Activated CD4-positive, alpha-beta memory T cell treated with anti-CD3 and anti-CD28 coated beads for 36 hours (primary cell): ENCODE measurements at regions of chr10 and their contacts with region 1.

Region 1: GRCh38 chr10:24209946-24210491 is 1.1 kb downstream of the KIAA1217 start:
- DNase-seq: peak; percentile 79
- H3K4me3 Mint-ChIP-seq: peak overlapping the region; percentile 42
- H3K27ac Mint-ChIP-seq: no peak overlapping the region
- H3K4me1 Mint-ChIP-seq: peaks cover 28% of the 10 kb centered on the region
- H3K27me3 Mint-ChIP-seq: peaks cover 44% of the 10 kb centered on the region

Region 2: DNA sequence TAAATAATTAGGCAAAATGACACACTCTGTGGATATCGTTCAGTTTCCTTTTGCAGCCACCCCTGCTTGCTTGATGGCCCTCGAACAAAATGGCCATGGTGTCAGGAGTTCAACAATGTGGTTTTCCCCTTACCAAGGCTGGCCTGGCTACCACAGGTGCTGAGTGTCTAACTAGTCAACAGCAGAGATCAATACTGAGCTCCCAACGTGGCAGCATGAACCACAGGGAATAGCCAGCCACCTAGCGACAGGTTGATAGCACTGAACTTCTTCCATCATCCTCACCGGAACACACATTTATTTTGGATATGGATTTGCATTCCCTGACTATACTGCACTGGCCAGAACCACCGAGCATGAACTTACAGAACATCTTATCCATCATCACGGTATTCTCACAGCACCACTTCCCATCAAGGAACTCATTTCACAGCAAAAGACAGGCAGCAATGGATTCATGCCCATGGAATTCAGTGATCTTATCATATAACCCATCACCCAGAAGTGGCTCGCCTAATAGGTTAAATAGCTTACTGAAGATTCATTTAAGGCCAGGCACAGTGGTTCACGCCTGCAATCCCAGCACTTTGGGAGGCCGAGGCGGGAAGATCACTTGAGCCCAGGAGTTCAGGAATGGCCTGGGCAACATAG is 871.7 kb before region 1 on chr10:
- CTCF ChIA-PET with region 1: no interaction called
- POLR2A ChIA-PET with region 1: no interaction called
- intact Hi-C with region 1: loop called (anchors 1 kb)
- DNase-seq: no peak
- H3K4me3 Mint-ChIP-seq: no peak overlapping the region
- H3K27ac Mint-ChIP-seq: no peak overlapping the region
- H3K4me1 Mint-ChIP-seq: peaks cover 73% of the 10 kb centered on the region
- H3K27me3 Mint-ChIP-seq: no peaks in the 10 kb centered on the region

Region 3: DNA sequence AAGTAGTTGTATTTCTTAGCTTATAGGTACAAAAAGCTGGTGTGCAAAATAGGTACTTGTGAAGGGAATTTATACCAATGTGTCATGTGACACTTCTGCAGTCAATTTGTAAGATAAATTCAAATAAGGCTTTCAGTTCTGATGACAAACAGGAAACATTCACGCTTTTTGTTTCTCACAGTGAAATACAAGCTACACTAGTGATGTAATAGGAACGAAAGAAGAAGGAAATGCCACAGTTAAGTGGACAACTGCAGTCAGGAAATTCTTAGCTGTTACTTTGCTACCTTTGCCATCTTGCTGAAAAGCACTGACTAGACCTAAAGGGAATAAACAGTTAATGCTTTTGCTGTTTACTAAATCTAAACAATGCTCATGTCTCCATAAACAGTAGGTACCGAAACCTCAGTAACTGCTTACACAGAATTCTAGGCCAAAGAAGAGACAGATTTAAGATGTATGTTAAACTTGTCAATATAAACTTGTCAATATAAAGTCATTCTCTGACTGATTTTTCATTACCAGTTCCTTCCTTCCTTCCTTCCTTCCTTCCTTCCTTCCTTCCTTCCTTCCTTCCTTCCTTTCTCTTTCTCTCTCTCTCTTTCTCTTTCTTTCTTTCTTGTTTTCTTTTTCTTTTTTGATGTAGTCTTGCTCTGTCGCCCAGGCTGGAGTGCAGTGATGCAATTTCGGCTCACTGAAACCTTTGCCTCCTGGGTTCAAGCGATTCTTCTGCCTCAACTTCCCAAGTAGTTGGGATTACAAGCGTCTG is 761.0 kb before region 1 on chr10:
- CTCF ChIA-PET with region 1: no interaction called
- POLR2A ChIA-PET with region 1: no interaction called
- intact Hi-C with region 1: loop called (anchors 1 kb)
- DNase-seq: no peak
- H3K4me3 Mint-ChIP-seq: no peak overlapping the region
- H3K27ac Mint-ChIP-seq: peak overlapping the region; percentile 82
- H3K4me1 Mint-ChIP-seq: peaks cover 34% of the 10 kb centered on the region
- H3K27me3 Mint-ChIP-seq: no peaks in the 10 kb centered on the region

Region 4: DNA sequence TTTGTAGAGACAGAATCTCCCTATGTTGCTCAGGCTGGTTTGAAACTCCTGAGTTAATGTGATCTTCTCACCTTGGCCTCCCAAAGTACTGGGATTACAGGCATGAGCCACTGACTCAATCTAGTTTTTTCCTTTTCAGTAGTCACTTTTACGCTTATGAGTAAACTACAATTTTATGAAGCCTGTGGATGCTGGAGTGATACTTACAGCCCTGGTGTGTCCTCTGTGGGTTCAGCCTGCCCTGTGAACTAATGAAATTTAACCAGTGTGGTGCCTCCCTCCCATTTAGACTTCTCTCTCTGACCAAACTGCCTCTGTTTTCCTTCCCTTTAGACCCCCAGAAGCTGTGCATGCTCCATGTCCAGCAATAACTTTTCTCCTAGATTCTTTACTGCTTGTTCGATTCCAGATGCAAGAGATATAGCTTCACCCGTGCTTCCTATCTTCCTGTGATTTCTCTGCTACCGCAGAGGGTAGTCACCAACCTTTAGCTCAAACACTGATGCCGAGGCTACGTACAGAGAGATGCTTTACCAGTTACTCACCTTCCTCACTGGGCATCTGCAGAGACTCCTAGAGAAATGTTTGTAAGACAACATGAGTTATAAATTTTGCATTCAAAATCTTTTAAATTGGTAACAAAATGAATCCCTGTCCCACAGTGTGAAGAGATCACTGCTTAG is 89.7 kb after region 1 on chr10:
- CTCF ChIA-PET with region 1: no interaction called
- POLR2A ChIA-PET with region 1: no interaction called
- intact Hi-C with region 1: loop called (anchors 1 kb)
- DNase-seq: peak; percentile 9
- H3K4me3 Mint-ChIP-seq: no peak overlapping the region
- H3K27ac Mint-ChIP-seq: no peak overlapping the region
- H3K4me1 Mint-ChIP-seq: peaks cover 5% of the 10 kb centered on the region
- H3K27me3 Mint-ChIP-seq: peaks cover 5% of the 10 kb centered on the region

Region 5: GRCh38 chr10:24383681-24384106 is 173.7 kb after region 1 on chr10:
- CTCF ChIA-PET with region 1: no interaction called
- POLR2A ChIA-PET with region 1: no interaction called
- intact Hi-C with region 1: loop called (anchors 1 kb)
- DNase-seq: peak; percentile 78
- H3K4me3 Mint-ChIP-seq: peak overlapping the region; percentile 12
- H3K27ac Mint-ChIP-seq: peak overlapping the region; percentile 74
- H3K4me1 Mint-ChIP-seq: peaks cover 13% of the 10 kb centered on the region
- H3K27me3 Mint-ChIP-seq: peaks cover 23% of the 10 kb centered on the region

Region 6: GRCh38 chr10:24465891-24466818 is 256.1 kb after region 1 on chr10:
- CTCF ChIA-PET with region 1: no interaction called
- POLR2A ChIA-PET with region 1: interaction called, 3 read pairs
- intact Hi-C with region 1: loop called (anchors 1 kb)
- DNase-seq: peak; percentile 84
- H3K4me3 Mint-ChIP-seq: peak overlapping the region; percentile 44
- H3K27ac Mint-ChIP-seq: peak overlapping the region; percentile 53
- H3K4me1 Mint-ChIP-seq: peaks cover 42% of the 10 kb centered on the region
- H3K27me3 Mint-ChIP-seq: peaks cover 21% of the 10 kb centered on the region

Region 7: GRCh38 chr10:24518981-24519597 is 309.1 kb after region 1 on chr10:
- CTCF ChIA-PET with region 1: no interaction called
- POLR2A ChIA-PET with region 1: no interaction called
- intact Hi-C with region 1: loop called (anchors 10 kb)
- DNase-seq: peak; percentile 46
- H3K4me3 Mint-ChIP-seq: no peak overlapping the region
- H3K27ac Mint-ChIP-seq: no peak overlapping the region
- H3K4me1 Mint-ChIP-seq: peaks cover 11% of the 10 kb centered on the region
- H3K27me3 Mint-ChIP-seq: peaks cover 7% of the 10 kb centered on the region